RWPE1 (cell line): ENCODE measurements at regions of chr1 and their contacts with region 1.

Region 1: DNA sequence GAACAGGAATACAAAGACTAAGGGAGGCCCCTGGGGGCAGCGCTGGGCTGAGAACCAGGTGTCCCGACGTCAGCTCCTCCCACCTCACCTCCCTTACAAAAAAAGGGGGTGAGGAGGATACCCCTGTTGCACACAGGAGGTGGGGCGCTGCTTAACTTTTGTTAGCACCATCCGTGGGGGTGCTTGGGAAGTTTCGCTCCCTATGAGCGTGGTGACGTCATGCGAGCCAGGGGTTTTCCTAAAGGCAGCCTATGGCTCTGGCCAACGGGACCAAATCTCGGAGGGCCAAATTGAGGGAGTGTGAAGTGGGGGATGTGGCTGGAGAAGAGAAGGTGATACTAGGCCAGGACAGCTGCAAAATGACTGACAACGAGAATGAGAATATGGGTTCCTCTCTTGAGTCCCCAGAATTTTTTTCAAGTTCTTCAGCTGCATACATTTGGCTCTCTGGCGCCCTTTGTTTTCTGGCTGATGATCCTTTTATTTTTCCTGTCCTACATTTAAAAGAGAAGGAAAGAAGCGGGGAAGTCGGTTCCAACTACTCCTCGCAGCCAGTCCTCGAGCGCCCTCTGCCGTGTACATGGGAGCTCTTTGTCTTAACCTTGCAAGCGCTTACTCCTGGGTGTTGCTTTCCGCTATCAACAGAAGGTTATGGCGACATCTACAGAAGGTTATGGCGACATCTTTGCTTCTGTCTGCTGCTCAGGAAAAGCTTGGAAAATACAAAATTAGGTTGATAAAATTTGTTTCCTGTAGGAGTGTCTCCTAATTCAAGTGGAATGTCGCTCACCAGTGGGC is 48.0 kb upstream of the ZC3H11B start:
- DNase-seq: peak; percentile 82
- H3K27ac ChIP-seq: no peak overlapping the region
- CTCF ChIP-seq: peak; percentile 87

Region 2: DNA sequence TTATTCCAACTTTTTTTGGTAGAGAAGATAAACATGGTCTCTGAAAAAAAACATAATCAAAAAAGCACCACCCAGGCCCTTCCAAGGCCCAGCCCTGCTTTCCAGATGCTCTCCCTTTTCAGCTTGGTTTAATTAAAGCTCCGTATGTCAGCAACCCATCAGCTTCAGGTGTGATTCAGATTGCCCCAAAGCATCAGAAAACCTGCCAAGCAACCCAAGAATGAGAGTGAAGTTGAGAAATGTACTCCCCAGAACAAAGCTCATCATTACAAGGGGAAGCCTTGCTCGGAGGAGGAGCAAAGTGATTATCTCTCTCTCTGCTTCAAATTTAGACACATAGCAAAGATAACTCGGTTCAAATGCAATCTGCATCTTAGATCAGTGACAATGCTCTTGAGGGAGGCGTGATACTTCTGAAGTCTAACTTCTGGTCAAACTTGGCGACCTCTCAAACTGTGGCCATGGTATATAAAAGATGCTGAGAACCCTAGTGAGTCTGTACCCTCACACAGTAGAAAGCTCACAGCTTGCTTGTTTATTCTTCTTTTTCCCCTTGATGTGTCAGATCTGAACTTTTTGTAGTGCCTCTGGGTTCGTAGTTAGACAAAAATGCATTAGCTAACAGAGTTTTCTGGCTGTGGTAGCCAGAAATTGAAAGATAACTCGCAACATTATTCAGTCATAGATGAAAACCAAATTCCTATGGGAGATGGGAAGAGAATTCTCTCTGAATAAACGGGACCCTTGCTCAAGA is 15.3 kb after region 1 on chr1:
- CTCF ChIA-PET with region 1: interaction called, 16 read pairs
- POLR2A ChIA-PET with region 1: no interaction called
- DNase-seq: no peak
- H3K27ac ChIP-seq: no peak overlapping the region
- CTCF ChIP-seq: no peak

Region 3: GRCh38 chr1:219713981-219714381 is 53.1 kb after region 1 on chr1:
- CTCF ChIA-PET with region 1: no interaction called
- POLR2A ChIA-PET with region 1: no interaction called
- DNase-seq: no peak
- H3K27ac ChIP-seq: no peak overlapping the region
- CTCF ChIP-seq: no peak

Region 4: DNA sequence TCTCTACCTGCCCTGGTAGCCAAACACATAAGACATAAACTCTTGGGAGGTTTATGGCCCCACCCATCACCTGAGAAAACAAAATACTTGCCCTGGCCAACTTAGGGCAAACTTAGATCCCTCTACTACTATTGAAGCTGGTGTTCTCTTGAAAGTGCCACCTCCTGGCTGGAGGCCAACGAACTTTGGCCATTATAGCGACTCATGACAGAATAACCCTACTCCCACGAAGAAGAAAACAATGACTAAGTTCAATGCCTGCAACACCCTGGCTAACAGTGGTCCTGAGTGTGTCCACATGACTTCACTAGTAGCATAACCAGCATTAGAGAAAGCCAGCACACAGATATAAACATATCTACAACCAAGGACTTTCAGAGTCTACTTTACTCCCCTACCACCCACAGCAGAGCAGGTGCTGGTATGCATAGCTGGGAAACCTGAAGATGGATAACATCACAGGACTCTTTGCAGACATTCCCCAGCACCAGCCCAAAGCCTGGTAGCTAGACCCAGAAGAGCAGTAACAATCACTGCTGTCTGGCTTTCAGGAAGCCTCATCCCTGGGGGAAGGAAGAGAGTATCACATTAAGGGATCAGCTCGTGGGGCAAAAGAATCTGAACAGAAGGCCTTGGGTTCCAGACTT is 186.5 kb after region 1 on chr1:
- CTCF ChIA-PET with region 1: no interaction called
- POLR2A ChIA-PET with region 1: no interaction called
- DNase-seq: no peak
- H3K27ac ChIP-seq: no peak overlapping the region
- CTCF ChIP-seq: no peak

Region 5: DNA sequence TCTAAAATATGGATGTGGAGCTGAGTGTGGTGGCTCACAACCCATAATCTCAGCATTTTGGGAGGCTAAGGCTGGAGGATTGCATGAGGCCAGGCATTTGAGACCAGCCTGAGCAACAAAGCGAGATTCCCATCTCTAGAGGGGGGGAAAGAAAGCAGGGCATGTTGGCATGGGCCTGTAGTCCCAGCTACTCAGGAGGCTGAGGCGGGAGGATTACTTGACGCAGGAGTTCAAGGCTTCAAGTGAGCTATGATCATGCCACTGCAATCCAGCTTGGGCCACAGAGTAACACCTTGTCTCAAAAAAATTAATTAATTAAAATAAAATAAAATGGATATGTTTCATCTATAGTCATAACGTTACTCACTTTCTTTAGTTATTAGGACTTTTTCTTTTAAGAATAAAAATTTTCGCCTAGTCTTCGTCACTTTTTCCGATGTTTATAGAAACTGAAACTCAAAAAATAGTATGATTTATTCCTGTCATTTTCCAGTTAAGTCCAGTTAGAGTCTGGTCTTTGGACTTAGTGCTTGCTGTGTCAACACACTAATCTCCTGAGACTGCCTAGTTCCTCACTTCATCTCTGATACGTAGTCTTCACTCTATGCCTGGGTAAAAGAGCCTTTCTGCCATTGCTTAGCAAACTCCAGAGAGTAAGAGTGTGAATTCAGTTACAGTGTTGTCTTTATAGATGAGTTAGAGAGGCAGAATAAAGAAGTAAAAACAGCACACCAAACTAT is 461.1 kb after region 1 on chr1:
- CTCF ChIA-PET with region 1: no interaction called
- POLR2A ChIA-PET with region 1: no interaction called
- DNase-seq: no peak
- H3K27ac ChIP-seq: no peak overlapping the region
- CTCF ChIP-seq: no peak